Activated T-helper 1 cell treated with anti-CD3 and anti-CD28 coated beads, Interleukin-12 subunit alpha, Interleukin-12 subunit beta, Interleukin-2, Interleukin-4 antibody, amounts not matched to agents 30 ng/mL and 10 ng/mL and 1 ng/mL, durations not matched to agents 14 hours and 24 hours and 36 hours (primary cell): ENCODE measurements at regions of chr12 and their contacts with region 1.

Region 1: DNA sequence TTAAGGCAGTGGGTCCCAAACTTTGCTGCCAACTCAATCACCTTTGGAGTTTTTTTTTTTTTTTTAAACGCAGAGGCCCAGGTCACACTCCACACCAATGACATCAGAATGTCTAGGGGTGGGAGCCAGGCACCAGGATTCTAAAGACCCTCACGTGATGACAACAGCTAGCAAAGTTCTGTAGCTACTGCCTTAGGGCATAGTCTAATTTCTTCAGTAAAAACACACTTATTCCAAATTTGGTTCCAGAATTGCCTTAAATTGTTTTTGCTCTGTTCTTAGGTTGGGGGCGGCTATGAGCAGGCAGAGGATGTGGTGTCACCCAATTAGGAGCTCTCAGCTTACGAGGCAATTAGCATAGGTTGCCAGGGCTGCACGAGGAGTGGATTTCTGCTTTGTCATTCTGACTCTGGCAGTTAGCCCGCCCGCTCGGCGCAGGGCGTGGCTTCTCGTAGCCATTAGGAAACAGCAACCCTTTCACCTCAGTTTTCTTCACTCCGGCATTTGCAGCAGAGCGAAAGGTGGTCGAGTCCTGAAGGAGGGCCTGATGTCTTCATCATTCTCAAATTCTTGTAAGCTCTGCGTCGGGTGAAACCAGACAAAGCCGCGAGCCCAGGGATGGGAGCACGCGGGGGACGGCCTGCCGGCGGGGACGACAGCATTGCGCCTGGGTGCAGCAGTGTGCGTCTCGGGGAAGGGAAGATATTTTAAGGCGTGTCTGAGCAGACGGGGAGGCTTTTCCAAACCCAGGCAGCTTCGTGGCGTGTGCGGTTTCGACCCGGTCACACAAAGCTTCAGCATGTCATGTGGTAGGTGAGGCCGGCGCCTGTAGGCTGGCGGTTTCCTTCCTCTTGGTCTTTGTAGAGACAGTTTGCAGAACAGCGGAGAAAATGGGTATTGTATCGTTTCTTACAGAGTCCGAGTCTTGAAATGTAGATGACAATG is 16.7 kb upstream of the EID3 start:
- DNase-seq: peak; percentile 90
- H3K4me3 Mint-ChIP-seq: peak overlapping the region; percentile 98
- H3K27ac Mint-ChIP-seq: peak overlapping the region; percentile 99
- H3K4me1 Mint-ChIP-seq: peaks cover 27% of the 10 kb centered on the region
- H3K27me3 Mint-ChIP-seq: no peaks in the 10 kb centered on the region

Region 2: DNA sequence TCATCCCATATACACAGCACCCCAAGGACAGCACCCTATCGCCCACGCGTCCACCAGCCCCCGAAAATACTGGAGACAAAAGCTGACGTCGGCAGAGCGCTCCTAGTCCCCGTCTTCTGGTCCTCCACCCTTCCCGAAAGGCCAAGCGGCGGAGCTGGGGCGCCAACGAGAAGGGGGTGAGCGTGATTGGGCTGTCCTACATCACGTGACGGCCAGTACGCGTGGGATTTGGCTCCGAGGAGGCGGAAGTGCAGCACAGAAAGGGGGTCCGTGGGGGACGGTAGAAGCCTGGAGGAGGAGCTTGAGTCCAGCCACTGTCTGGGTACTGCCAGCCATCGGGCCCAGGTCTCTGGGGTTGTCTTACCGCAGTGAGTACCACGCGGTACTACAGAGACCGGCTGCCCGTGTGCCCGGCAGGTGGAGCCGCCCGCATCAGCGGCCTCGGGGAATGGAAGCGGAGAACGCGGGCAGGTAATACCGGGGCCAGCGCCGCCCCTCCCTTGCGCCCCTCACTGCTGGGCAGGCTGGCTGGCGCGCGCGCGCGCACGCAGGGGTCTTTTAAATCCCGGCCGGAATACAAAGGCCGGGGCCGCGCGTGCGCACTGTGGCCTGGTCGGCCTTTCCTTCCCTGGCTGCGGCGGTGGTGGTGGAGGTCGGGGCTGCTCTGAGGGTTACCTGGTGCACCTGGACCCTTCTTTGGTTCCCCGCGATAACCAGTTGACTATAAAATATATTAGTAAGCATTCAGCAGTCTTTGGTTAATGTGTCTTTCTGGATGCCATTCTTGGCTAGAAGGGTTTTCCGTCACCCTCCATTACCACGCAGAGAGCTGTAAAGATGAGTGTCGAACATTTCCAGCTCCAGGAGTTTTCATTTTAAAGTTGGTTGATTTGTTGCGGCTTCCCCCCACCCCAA is 321.0 kb before region 1 on chr12 and contains the start of gene TDG:
- intact Hi-C with region 1: loop called (anchors 2 kb)
- DNase-seq: peak; percentile 95
- H3K4me3 Mint-ChIP-seq: peak within 1 kb of the TSS; percentile 98
- H3K27ac Mint-ChIP-seq: peak within 1 kb of the TSS; percentile 99
- H3K4me1 Mint-ChIP-seq: peaks cover 47% of the 10 kb centered on the region
- H3K27me3 Mint-ChIP-seq: no peaks in the 10 kb centered on the region
- total RNA-seq, gene TDG: 80.4 and 81.6 TPM in 2 replicates

Region 3: DNA sequence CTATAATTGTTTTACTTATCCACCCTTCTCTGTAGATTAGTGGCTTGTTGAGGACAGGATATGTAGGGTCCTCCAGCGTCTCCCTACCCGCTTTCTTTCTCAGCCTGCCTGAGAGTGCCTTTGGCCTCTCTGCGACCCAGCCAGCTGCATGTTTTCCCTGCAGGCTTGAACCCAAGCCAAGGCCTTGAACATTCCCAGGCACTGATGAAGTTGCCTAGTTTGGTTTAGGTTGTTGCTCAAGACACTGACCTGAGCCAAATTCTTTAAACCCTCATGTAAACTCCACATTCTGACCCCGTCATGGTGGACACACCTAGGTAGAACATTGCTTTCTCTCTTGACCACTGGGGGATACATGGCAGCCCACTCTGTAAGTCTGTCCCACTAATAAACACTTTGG is 104.7 kb before region 1 on chr12:
- intact Hi-C with region 1: no loop called
- DNase-seq: no peak
- H3K4me3 Mint-ChIP-seq: no peak overlapping the region
- H3K27ac Mint-ChIP-seq: no peak overlapping the region
- H3K4me1 Mint-ChIP-seq: peaks cover 13% of the 10 kb centered on the region
- H3K27me3 Mint-ChIP-seq: peaks cover 2% of the 10 kb centered on the region

Region 4: DNA sequence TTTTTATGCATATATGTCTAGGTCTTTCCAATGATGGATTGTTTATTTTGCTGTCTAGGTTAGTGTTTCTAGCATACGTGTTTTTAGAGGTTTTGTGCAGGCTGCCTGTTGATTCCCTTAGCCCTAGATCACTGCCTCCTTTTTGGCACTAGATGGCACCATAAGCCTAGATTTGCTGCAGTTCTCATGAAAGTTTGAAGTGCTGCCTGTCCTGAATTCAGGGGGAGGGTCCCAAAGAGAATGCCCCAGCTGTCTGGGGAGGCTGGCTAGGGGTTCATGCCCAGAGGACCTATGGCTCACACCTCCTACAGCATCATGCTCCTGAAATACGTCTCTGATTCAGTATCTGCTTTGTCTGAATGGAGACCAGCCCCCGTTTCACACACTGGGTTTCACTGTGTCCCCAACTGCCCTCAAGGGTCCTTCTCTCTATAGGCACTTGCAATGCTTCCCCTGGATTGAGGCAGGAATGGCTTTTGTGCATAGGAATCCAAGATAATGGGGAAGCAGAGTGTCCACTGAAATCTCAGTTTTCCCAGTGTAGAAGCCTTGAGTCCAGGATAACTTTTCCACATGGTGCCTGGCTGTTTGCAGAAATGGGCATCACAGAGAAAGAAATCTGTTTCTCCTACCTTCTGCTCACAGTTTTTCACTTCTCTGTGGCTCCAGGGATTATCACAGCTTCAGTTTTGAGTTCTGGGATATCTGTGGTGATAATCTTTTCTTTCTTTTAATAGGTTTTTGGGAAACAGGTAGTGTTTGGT is 85.4 kb before region 1 on chr12:
- intact Hi-C with region 1: loop called (anchors 1 kb)
- DNase-seq: peak; percentile 24
- H3K4me3 Mint-ChIP-seq: no peak overlapping the region
- H3K27ac Mint-ChIP-seq: no peak overlapping the region
- H3K4me1 Mint-ChIP-seq: peaks cover 4% of the 10 kb centered on the region
- H3K27me3 Mint-ChIP-seq: peaks cover 12% of the 10 kb centered on the region

Region 5: GRCh38 chr12:104358347-104359003 is 71.7 kb after region 1 on chr12:
- intact Hi-C with region 1: no loop called
- DNase-seq: peak; percentile 58
- H3K4me3 Mint-ChIP-seq: no peak overlapping the region
- H3K27ac Mint-ChIP-seq: no peak overlapping the region
- H3K4me1 Mint-ChIP-seq: peaks cover 7% of the 10 kb centered on the region
- H3K27me3 Mint-ChIP-seq: peaks cover 2% of the 10 kb centered on the region

Region 6: GRCh38 chr12:104569346-104570173 is 282.8 kb after region 1 on chr12:
- intact Hi-C with region 1: loop called (anchors 5 kb)
- DNase-seq: peak; percentile 58
- H3K4me3 Mint-ChIP-seq: peak overlapping the region; percentile 64
- H3K27ac Mint-ChIP-seq: peak overlapping the region; percentile 89
- H3K4me1 Mint-ChIP-seq: peaks cover 63% of the 10 kb centered on the region
- H3K27me3 Mint-ChIP-seq: no peaks in the 10 kb centered on the region

Region 7: DNA sequence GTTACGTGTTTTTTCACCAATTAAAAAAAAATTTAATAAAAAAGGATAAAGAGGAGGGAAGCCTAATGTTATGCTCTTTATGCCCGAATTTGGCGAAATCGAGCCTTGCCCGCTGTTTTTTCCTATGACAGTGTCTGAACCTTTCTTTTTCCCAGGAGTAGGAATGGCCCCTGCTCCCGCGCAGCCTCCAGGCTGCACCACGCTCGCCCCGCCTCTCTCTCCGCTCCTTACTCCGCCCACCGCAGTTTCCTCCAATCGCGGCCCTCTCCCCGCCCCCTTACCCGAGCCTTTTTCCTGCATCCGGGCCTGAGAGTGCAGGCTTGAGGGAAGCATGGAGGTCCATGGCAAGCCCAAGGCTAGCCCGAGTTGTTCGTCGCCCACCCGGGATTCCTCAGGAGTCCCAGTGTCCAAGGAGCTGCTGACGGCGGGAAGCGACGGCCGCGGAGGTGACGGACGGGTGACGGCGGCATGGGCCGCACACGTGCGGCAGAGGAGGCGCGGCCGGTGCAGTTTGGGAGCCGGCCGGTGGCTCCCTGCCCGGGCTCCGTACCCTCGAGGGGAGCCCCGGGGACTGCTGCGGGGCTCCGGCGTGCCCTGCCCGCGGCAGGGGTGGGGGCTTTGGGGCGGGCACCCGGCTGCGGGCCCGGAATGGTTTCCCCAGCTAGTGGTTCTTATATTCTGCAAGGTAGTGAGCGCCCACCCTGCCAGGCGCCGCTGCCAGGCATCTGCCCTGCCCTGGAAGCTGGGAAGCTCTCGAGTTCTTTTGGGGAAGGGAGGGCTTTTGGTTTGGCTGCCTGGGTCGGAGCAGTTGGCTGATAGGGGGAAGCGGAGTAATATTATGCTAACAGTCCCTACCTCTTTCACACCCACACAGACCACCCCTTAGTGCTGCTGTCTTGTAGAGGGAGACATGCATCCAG is 699.5 kb after region 1 on chr12 and contains the start of gene NOPCHAP1:
- intact Hi-C with region 1: loop called (anchors 1 kb)
- DNase-seq: peak; percentile 83
- H3K4me3 Mint-ChIP-seq: peak within 1 kb of the TSS; percentile 89
- H3K27ac Mint-ChIP-seq: peak within 1 kb of the TSS; percentile 57
- H3K4me1 Mint-ChIP-seq: peaks cover 44% of the 10 kb centered on the region
- H3K27me3 Mint-ChIP-seq: peaks cover 3% of the 10 kb centered on the region
- total RNA-seq, gene NOPCHAP1: 28.0 and 40.0 TPM in 2 replicates